Activated CD4-positive, alpha-beta T cell treated with anti-CD3 and anti-CD28 coated beads, Interleukin-2, amount 10 ng/mL, durations not matched to agents 7 days and 5 days (primary cell): ENCODE measurements at regions of chr4 and their contacts with region 1.

Region 1: DNA sequence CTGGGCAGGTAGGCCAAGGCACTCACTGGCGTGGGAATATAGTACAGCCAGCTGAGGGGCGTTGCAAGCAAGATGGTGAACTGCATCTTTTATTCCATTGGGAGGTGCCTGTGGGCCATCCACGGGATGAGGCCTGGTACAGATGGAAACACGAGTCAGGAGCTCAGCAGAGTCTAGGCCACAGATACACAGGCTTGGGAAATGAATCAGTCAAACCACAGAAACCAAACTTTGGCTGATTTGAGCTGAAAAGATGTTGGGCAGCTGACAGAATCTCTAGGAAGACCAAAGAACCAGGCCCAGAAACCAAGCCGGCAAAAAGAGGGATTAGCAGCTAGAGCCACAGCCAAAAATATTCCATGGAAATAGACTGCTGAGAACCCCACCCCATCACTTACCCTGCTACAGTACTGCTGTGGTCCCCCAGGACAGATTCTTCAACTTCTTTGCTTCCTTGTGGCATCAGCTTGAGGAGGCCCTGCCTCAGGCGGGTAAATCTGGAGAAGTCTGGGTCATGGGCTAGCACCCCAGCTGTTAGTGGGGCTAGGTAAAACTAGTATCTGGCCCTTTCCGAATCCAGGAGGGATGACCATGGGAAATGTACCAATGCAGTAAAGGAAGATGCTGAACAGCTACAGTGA is 75.4 kb downstream of the TMEM131L start:
- DNase-seq: peak; percentile 25
- H3K4me3 Mint-ChIP-seq: no peak overlapping the region
- H3K27ac Mint-ChIP-seq: peak overlapping the region; percentile 7
- H3K4me1 Mint-ChIP-seq: peaks cover 57% of the 10 kb centered on the region
- H3K27me3 Mint-ChIP-seq: no peaks in the 10 kb centered on the region

Region 2: DNA sequence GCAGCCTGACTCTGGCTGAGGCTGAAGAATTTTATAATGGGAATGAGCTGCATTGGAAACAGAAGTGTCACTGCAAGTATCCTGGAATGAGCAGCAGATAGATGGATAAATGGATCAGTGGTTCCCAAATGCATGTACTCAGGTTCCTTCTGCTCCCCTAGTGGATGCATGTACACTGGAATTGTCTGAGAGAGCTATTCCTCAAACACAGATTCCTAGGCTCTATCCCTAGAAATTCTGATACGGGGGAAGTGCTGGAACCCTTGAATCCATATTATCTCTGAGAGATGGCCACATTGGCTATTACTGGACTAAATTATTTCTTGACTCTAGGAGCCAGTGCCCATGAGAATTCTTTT is 10.6 kb before region 1 on chr4:
- CTCF ChIA-PET with region 1: interaction called, 14 read pairs
- POLR2A ChIA-PET with region 1: no interaction called
- DNase-seq: no peak
- H3K4me3 Mint-ChIP-seq: peak overlapping the region; percentile 68
- H3K27ac Mint-ChIP-seq: peak overlapping the region; percentile 92
- H3K4me1 Mint-ChIP-seq: peaks cover 85% of the 10 kb centered on the region
- H3K27me3 Mint-ChIP-seq: no peaks in the 10 kb centered on the region

Region 3: GRCh38 chr4:153553155-153553818 is 11.7 kb after region 1 on chr4:
- CTCF ChIA-PET with region 1: interaction called, 10 read pairs
- POLR2A ChIA-PET with region 1: no interaction called
- DNase-seq: no peak
- H3K4me3 Mint-ChIP-seq: no peak overlapping the region
- H3K27ac Mint-ChIP-seq: no peak overlapping the region
- H3K4me1 Mint-ChIP-seq: peaks cover 21% of the 10 kb centered on the region
- H3K27me3 Mint-ChIP-seq: no peaks in the 10 kb centered on the region